Right ventricle myocardium superior (tissue), 1 donor: ENCODE measurements at regions of chr12 and their contacts with region 1.

Region 1: GRCh38 chr12:91332302-91332701 is 149.7 kb upstream of the DCN start:
- DNase-seq: no peak
- ATAC-seq: no peak

Region 2: GRCh38 chr12:91178139-91178561 is 154.2 kb before region 1 on chr12:
- intact Hi-C with region 1: loop called (anchors 5 kb)
- DNase-seq: no peak
- ATAC-seq: peak; percentile 40

Region 3: GRCh38 chr12:91189516-91189915 is 142.8 kb before region 1 on chr12:
- intact Hi-C with region 1: no loop called
- DNase-seq: no peak
- ATAC-seq: no peak

Region 4: DNA sequence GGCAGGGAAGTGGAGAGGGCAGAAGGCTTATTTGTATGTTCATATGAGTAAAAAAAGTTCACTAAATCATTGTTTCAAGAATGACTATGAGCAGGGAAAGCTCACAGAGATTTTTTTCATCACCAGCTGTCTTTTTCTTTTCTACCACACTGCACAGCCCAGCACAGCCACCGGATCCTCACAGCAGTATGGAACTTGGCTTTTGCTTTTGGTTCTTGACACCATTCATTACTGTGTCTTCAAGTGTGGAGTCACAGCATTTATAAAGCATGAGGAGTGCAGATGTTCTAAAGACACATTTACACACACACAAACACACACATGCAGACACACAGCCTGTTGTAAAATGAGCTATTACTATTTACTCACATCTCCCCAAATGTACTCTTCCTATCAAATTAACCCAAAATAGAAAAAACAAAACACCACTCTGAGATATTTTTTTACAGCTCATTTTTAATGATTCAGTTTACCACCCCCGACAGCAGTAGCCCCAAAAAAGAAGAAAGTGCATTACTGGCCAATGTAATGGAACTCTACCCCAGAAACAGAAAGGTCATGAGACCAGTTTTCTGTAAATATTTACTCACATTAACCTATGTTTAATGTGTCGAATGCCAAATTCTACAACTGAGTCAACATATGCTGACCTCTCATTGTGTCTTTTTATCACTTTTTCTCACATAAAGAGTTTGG is 752.9 kb after region 1 on chr12:
- intact Hi-C with region 1: no loop called
- DNase-seq: no peak
- ATAC-seq: no peak